ENCODE measurements at regions of chr5 and their contacts with region 1.

Region 1: GRCh38 chr5:141633871-141634561 is 2.6 kb downstream of the HDAC3 start:
- H3K4me3 Mint-ChIP-seq: peak overlapping the region; percentile 53
- H3K27ac Mint-ChIP-seq: peak overlapping the region; percentile 59
- H3K4me1 Mint-ChIP-seq: peaks cover 62% of the 10 kb centered on the region
- H3K27me3 Mint-ChIP-seq: no peaks in the 10 kb centered on the region

Region 2: GRCh38 chr5:140923601-140924000 is 710.4 kb before region 1 on chr5:
- intact Hi-C with region 1: no loop called
- H3K4me3 Mint-ChIP-seq: no peak overlapping the region
- H3K27ac Mint-ChIP-seq: no peak overlapping the region
- H3K4me1 Mint-ChIP-seq: peaks cover 8% of the 10 kb centered on the region
- H3K27me3 Mint-ChIP-seq: peaks cover 37% of the 10 kb centered on the region

Region 3: GRCh38 chr5:141590127-141590526 is 43.9 kb before region 1 on chr5:
- intact Hi-C with region 1: loop called (anchors 5 kb)
- H3K4me3 Mint-ChIP-seq: no peak overlapping the region
- H3K27ac Mint-ChIP-seq: peak overlapping the region; percentile 33
- H3K4me1 Mint-ChIP-seq: peaks cover 66% of the 10 kb centered on the region
- H3K27me3 Mint-ChIP-seq: no peaks in the 10 kb centered on the region

Region 4: DNA sequence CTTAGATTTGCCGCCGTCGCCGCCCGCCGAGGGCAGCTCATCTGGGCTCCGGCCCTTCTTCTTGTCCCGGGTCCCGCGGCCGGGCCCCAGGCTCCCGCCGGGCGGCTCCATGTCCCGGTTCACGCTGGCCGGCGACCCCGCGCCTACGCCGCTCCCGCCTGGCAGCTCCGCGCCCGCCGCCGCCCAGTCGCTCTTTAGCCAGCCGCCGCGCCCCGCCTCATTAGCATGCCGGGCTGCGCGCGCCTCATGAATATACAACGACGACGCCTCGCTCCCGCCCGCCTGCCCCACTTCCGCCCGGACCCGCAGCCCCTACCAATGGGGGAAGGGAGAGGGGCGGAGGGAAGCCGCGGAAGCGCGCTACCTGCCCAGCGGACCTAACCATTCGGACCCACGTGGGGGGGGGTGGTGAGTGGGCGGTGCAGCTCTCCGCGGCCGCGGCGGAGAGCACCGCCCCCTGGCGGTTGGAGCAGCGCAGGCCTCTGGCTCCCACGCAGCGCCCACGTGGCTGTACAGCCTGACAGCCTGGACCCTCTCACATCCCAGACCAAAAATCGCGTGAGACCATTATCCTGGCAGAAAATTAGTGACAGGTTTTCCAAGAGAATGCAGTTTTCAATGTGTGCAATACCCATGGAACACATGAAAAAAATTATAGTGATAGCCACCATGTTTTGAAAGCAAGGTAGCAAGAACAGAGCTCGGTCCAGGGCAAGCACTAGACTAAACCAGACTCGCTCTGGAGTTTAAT is 15.0 kb before region 1 on chr5 and contains the start of gene DIAPH1:
- intact Hi-C with region 1: loop called (anchors 2 kb)
- H3K4me3 Mint-ChIP-seq: peak within 1 kb of the TSS; percentile 92
- H3K27ac Mint-ChIP-seq: peak within 1 kb of the TSS; percentile 92
- H3K4me1 Mint-ChIP-seq: peaks cover 70% of the 10 kb centered on the region
- H3K27me3 Mint-ChIP-seq: no peaks in the 10 kb centered on the region

Region 5: DNA sequence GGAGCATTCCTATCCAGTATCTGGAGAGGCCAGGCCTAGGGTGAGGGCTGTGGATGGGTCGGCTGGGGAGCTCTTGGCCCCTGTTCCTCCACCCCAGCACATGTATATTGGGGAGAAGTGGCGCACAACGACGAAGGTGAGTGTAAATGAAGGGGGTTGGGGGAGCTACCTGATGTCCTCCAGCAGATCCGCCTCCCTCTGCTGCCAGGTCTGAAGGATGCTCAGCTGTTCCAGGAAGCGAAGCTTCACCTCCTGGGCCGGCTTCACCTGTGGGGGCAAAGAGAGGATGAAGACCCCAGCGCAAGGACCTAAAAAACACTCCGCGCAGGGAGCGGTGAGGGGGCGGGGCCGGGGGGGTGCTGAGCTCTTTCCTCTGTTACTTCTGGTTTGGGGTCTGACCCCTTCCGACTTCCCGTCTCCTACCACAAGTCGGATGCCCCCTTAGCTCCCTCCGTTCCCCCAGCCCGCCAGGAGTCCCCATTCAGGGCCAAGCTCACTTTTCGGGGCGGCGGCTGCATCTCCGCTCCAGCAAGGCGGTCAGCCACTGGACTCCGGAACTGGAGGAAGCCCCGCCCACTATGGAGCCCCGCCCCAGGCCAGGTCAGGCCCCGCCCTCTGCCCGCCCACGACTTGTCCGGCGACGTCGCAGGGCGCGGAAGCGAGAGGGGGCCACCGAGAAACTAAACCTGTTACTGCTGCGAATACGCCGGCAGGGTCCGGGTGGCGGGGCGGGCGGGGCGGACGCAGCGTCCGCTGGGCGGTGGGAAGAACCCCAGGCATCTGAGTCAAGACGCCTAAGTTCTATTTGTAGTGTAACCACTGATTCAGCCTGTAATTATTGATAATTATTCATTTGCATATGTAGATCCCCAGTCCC is 17.1 kb after region 1 on chr5 and contains the start of gene FCHSD1:
- intact Hi-C with region 1: loop called (anchors 1 kb)
- H3K4me3 Mint-ChIP-seq: peak within 1 kb of the TSS; percentile 99
- H3K27ac Mint-ChIP-seq: peak within 1 kb of the TSS; percentile 84
- H3K4me1 Mint-ChIP-seq: peaks cover 36% of the 10 kb centered on the region
- H3K27me3 Mint-ChIP-seq: peaks cover 7% of the 10 kb centered on the region

Region 6: GRCh38 chr5:141664732-141665461 is 30.9 kb after region 1 on chr5:
- intact Hi-C with region 1: no loop called
- H3K4me3 Mint-ChIP-seq: no peak overlapping the region
- H3K27ac Mint-ChIP-seq: no peak overlapping the region
- H3K4me1 Mint-ChIP-seq: peaks cover 11% of the 10 kb centered on the region
- H3K27me3 Mint-ChIP-seq: no peaks in the 10 kb centered on the region

Region 7: GRCh38 chr5:141681695-141682641 is 48.0 kb after region 1 on chr5 and contains the start of gene ARAP3:
- intact Hi-C with region 1: no loop called
- H3K4me3 Mint-ChIP-seq: peak within 1 kb of the TSS; percentile 64
- H3K27ac Mint-ChIP-seq: peak within 1 kb of the TSS; percentile 60
- H3K4me1 Mint-ChIP-seq: peaks cover 47% of the 10 kb centered on the region
- H3K27me3 Mint-ChIP-seq: peaks cover 3% of the 10 kb centered on the region

Measured in dendritic cell treated with granulocyte-macrophage colony-stimulating factor and Interleukin-4, amounts not matched to agents 40 ng/mL and 50 ng/mL, for 4 days (primary cell).